ENCODE measurements at regions of chr1 and their contacts with region 1.

Region 1: DNA sequence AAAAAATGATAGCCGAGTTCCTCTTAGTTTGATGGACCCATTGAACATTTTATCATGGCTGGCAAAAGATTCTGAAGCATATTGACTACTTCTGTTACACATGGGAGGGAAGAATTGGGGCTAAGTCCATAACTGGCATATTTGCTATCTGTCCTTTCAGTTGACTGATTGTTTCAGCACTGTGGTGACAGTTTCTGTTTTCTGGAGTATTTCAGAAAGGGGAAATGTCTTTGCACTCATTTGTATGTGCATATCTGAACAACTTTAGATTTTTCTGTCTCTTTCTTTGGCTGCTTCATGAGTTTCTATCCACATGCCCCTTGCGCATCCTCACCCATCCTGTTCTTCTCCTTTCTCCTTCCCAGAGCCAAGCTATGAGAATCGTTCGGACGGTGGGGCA is 33.2 kb downstream of the SPATA46 start:
- DNase-seq: no peak
- ATAC-seq: no peak
- H3K4me3 ChIP-seq: no peak overlapping the region
- H3K27ac ChIP-seq: no peak overlapping the region
- H3K4me1 ChIP-seq: no peaks in the 10 kb centered on the region; a peak in 1 of 5 replicates
- H3K27me3 ChIP-seq: no peaks in the 10 kb centered on the region
- CTCF ChIP-seq: no peak
- EP300 ChIP-seq: no peak
- POLR2A ChIP-seq: no peak
- RAD21 ChIP-seq: no peak

Region 2: GRCh38 chr1:162230096-162230495 is 113.4 kb before region 1 on chr1:
- CTCF ChIA-PET with region 1: no interaction called
- POLR2A ChIA-PET with region 1: no interaction called
- in situ Hi-C with region 1: no loop called
- intact Hi-C with region 1: no loop called
- DNase-seq: no peak
- ATAC-seq: no peak
- H3K4me3 ChIP-seq: no peak overlapping the region
- H3K27ac ChIP-seq: no peak overlapping the region
- H3K4me1 ChIP-seq: no peaks in the 10 kb centered on the region
- H3K27me3 ChIP-seq: peaks cover 0 to 7% of the 10 kb centered on the region in 2 experiments; a peak in 3 of 5 replicates
- CTCF ChIP-seq: no peak
- EP300 ChIP-seq: no peak
- POLR2A ChIP-seq: no peak
- RAD21 ChIP-seq: no peak

Region 3: DNA sequence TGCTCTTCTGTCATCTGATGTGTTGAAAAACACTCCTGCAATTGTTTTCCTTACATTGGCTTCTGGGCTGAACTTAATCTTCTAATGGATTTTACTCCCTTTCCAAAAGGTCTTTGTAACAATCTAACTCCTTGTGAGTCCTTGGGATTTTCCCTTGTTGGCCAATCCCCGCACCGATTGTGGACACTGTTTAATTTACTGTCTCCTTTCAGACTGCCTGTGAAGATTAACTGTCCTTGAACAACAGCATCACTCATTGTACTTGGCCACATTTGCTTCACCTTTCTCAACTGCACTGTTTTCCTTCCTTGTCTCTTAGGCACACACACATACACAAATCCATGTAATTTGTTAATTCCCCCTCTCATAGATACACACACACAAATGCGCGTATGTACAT is 87.2 kb before region 1 on chr1:
- CTCF ChIA-PET with region 1: no interaction called
- POLR2A ChIA-PET with region 1: no interaction called
- in situ Hi-C with region 1: no loop called
- intact Hi-C with region 1: no loop called
- DNase-seq: no peak
- ATAC-seq: no peak
- H3K4me3 ChIP-seq: no peak overlapping the region
- H3K27ac ChIP-seq: no peak overlapping the region
- H3K4me1 ChIP-seq: no peaks in the 10 kb centered on the region
- H3K27me3 ChIP-seq: peaks cover 3 to 4% of the 10 kb centered on the region in 2 experiments; a peak in 3 of 5 replicates
- CTCF ChIP-seq: no peak
- EP300 ChIP-seq: no peak
- POLR2A ChIP-seq: no peak
- RAD21 ChIP-seq: no peak

Region 4: GRCh38 chr1:162292422-162292849 is 51.0 kb before region 1 on chr1:
- CTCF ChIA-PET with region 1: no interaction called
- POLR2A ChIA-PET with region 1: no interaction called
- in situ Hi-C with region 1: no loop called
- intact Hi-C with region 1: loop called (anchors 5 kb)
- DNase-seq: no peak
- ATAC-seq: no peak
- H3K4me3 ChIP-seq: no peak overlapping the region
- H3K27ac ChIP-seq: no peak overlapping the region
- H3K4me1 ChIP-seq: no peaks in the 10 kb centered on the region; a peak in 1 of 5 replicates
- H3K27me3 ChIP-seq: peaks cover 0 to 22% of the 10 kb centered on the region in 2 experiments; a peak in 2 of 5 replicates
- CTCF ChIP-seq: no peak
- EP300 ChIP-seq: no peak
- POLR2A ChIP-seq: no peak
- RAD21 ChIP-seq: no peak

Measured in K562 (cell line).